Posterior vena cava (tissue), 2 donors: ENCODE measurements at regions of chrX and their contacts with region 1.

Region 1: GRCh38 chrX:67636532-67636931 is 92.7 kb downstream of the AR start:
- DNase-seq: no peak

Region 2: DNA sequence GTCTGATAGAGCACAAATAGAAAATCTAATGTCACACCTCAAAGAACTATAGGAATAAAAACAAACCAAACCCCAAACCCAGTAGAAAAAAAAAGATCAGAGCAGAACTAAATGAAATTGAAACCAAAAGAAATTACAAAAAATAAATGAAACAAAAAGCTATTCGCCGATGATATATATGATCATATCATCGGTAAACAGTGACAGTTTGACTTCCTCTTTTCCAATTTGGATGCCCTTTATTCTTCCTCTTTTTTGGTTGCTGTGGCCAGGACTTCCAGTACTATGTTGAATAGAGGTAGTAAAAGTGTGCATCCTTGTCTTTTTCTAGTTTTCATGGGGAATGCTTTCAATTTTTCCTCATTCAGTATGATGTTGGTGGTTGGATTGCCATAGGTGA is 308.1 kb before region 1 on chrX:
- intact Hi-C with region 1: loop called in 1 of 2 experiments (anchors 5 kb)
- DNase-seq: no peak